A549 (cell line): ENCODE measurements at regions of chr1 and their contacts with region 1.

Region 1: DNA sequence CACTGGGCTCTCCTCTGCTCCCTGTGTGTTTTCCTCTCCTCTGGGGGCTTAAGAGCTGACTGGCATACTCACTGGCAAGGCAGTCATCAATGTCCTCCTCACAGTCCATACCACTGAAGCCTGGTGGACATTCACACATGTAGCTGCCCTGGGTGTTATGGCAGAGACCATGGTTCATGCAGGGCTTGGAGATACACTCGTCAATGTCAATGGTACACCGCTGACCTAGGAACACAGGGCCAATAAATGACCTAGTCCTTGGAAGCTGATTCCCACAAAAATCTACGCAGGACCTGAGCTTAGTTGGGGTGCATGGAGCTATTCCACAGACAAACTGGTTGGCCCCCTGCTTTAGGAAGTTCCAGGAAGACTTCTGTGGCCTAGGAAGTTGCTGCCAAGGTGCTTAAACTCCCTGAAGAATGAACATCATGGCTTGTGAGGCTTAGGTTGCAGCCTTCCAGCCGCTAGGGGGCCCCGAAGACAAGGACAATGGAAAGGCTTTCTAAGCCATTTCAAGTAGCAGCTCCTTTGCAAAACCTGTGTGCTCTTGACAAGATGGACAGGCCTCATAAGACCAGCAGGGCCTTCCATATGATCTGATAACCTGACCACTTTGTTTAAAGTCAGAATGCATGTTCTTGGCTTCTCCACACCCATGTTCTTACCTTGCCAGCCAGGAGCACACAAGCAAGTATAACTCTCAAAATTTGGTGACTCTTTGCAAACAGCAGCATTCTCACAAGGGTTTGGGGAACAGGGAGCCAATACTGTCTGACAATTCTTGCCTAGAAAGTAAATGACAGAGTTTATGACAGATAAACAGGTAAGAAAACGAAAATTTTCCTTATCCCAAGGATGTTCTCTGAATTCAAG is 52.3 kb upstream of the ADAM30 start:
- DNase-seq: peak; percentile 7 to 62
- ATAC-seq: peak; percentile 85 to 95
- H3K4me3 ChIP-seq: no peak overlapping the region
- H3K27ac ChIP-seq: no peak overlapping the region
- H3K4me1 ChIP-seq: no peaks in the 10 kb centered on the region
- CTCF ChIP-seq: peak; percentile 64
- EP300 ChIP-seq: no peak
- POLR2A ChIP-seq: no peak
- RAD21 ChIP-seq: peak; percentile 77 to 84

Region 2: DNA sequence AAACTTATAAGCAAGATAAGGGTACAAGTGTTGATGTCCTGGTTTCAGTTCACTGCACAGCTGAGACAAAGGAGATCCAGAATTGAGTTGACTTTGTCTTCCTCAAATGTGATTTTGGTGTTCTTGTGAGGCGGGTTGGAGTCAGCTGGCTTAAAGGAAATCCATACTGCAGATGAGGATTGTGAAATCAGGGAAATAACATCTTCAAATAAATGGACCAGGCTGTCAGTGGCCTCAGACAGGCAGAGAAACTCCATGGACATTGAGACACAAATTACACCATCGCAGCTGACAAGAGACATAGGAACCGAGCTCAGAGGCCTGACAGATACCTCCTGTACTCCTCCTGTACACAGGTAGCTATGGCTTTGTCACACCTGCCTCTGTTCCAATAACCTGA is 110.3 kb before region 1 on chr1:
- CTCF ChIA-PET with region 1: no interaction called
- POLR2A ChIA-PET with region 1: no interaction called
- DNase-seq: no peak
- ATAC-seq: no peak
- H3K4me3 ChIP-seq: no peak overlapping the region
- H3K27ac ChIP-seq: no peak overlapping the region
- H3K4me1 ChIP-seq: no peaks in the 10 kb centered on the region
- CTCF ChIP-seq: no peak
- EP300 ChIP-seq: no peak
- POLR2A ChIP-seq: no peak
- RAD21 ChIP-seq: no peak

Region 3: GRCh38 chr1:119878171-119878570 is 70.4 kb before region 1 on chr1:
- CTCF ChIA-PET with region 1: no interaction called
- POLR2A ChIA-PET with region 1: no interaction called
- DNase-seq: no peak
- ATAC-seq: no peak
- H3K4me3 ChIP-seq: no peak overlapping the region
- H3K27ac ChIP-seq: no peak overlapping the region
- H3K4me1 ChIP-seq: no peaks in the 10 kb centered on the region
- CTCF ChIP-seq: no peak
- EP300 ChIP-seq: no peak
- POLR2A ChIP-seq: no peak
- RAD21 ChIP-seq: no peak

Region 4: GRCh38 chr1:119917304-119918055 is 31.1 kb before region 1 on chr1:
- CTCF ChIA-PET with region 1: no interaction called
- POLR2A ChIA-PET with region 1: no interaction called
- DNase-seq: no peak
- ATAC-seq: no peak
- H3K4me3 ChIP-seq: no peak overlapping the region
- H3K27ac ChIP-seq: no peak overlapping the region; a peak in 1 of 6 replicates
- H3K4me1 ChIP-seq: no peaks in the 10 kb centered on the region
- CTCF ChIP-seq: no peak
- EP300 ChIP-seq: no peak
- POLR2A ChIP-seq: no peak
- RAD21 ChIP-seq: no peak

Region 5: DNA sequence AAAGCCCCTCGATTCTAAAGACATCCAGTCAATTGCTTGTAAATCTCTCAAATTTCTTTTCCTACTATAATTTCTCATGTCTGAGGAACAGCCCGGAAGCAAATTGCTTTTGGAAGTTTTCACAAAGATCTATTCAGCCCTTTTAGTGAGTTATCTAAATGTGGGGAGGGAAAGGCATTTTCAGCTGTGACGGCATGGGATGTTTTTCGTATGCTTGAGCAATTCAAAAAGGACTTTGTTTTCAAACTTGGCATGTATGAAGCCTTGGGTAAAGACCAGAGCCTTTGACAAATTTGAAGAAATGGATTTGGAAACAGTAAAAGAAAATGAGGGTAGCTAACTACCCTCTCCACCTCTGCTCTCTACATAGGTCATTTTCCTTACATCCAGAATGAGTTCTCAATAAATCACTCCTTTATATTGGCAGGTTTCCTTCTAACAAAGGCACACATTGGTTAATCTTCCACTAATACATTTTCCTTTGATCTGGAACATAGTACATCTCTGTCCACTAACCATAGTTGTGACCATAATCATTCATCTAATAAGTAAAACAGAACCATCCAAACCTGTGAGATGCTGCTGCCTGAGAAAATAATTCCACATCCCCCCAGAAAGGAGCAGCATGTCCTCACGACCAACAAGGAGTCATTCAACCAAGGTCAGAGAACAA is 13.9 kb after region 1 on chr1:
- CTCF ChIA-PET with region 1: interaction called, 21 read pairs
- POLR2A ChIA-PET with region 1: no interaction called
- DNase-seq: no peak
- ATAC-seq: no peak
- H3K4me3 ChIP-seq: no peak overlapping the region
- H3K27ac ChIP-seq: no peak overlapping the region
- H3K4me1 ChIP-seq: no peaks in the 10 kb centered on the region
- CTCF ChIP-seq: no peak
- EP300 ChIP-seq: no peak
- POLR2A ChIP-seq: no peak
- RAD21 ChIP-seq: no peak

Region 6: DNA sequence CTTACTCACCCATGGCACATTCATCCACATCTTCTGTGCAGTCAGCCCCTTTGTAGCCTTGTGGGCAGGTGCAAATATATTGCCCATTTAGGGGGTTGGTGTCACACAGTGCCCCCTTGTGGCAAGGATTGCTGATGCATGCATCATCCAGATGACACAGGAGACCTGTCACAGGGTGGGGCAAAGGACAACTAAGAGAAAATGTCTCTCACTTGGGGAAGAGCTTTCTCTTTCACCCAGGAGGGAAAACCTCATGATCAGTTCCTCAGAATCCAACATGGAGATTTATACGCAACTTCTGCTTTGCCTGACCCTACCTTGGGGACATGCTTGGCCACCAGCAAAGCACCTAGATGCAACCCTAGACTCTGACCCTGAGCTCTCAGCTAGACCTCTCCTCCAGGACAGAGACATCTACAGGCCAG is 19.5 kb after region 1 on chr1:
- CTCF ChIA-PET with region 1: interaction called, 21 read pairs
- POLR2A ChIA-PET with region 1: no interaction called
- DNase-seq: peak; percentile 6 to 54
- ATAC-seq: peak; percentile 62 to 87; a peak in 5 of 6 replicates
- H3K4me3 ChIP-seq: no peak overlapping the region
- H3K27ac ChIP-seq: no peak overlapping the region
- H3K4me1 ChIP-seq: no peaks in the 10 kb centered on the region
- CTCF ChIP-seq: peak; percentile 64
- EP300 ChIP-seq: no peak
- POLR2A ChIP-seq: no peak
- RAD21 ChIP-seq: peak; percentile 27 to 49; a peak in 4 of 5 replicates